CD14-positive monocyte (primary cell): ENCODE measurements at regions of chr10 and their contacts with region 1.

Region 1: DNA sequence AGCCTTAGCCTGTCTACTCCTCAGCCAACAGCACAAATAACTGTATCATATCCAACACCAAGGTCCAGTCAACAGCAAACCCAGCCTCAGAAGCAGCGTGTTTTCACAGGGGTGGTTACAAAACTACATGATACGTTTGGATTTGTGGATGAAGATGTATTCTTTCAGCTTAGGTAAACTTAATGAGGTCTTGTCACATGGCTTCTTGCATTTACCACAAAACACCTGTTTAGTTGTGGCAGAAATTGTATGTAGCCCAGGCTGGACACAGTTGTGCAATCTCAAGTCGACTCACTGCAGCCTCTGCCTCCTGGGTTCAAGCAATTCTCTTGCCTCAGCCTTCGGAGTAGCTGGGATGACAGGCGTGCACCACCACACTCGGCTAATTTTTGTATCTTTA is 21.4 kb downstream of the CCAR1 start:
- DNase-seq: no peak
- H3K4me3 ChIP-seq: no peak overlapping the region
- H3K4me3 Mint-ChIP-seq: no peak overlapping the region
- H3K27ac ChIP-seq: no peak overlapping the region
- H3K27ac Mint-ChIP-seq: no peak overlapping the region
- H3K4me1 ChIP-seq: no peaks in the 10 kb centered on the region
- H3K4me1 Mint-ChIP-seq: no peaks in the 10 kb centered on the region
- H3K27me3 ChIP-seq: no peaks in the 10 kb centered on the region
- H3K27me3 Mint-ChIP-seq: peaks cover 0 to 2% (median 0%) of the 10 kb centered on the region in 3 donors
- CTCF ChIP-seq: no peak

Region 2: GRCh38 chr10:68938119-68938518 is 195.7 kb after region 1 on chr10:
- intact Hi-C with region 1: loop called in 1 of 2 experiments (anchors 10 kb)
- DNase-seq: no peak
- H3K4me3 ChIP-seq: no peak overlapping the region
- H3K4me3 Mint-ChIP-seq: no peak overlapping the region
- H3K27ac ChIP-seq: no peak overlapping the region
- H3K27ac Mint-ChIP-seq: no peak overlapping the region
- H3K4me1 ChIP-seq: no peaks in the 10 kb centered on the region
- H3K4me1 Mint-ChIP-seq: no peaks in the 10 kb centered on the region
- H3K27me3 ChIP-seq: no peaks in the 10 kb centered on the region
- H3K27me3 Mint-ChIP-seq: peaks cover 0 to 2% (median 0%) of the 10 kb centered on the region in 3 donors
- CTCF ChIP-seq: no peak